ENCODE measurements at regions of chr12 and their contacts with region 1.

Region 1: GRCh38 chr12:56645717-56646446 is at the start of gene ATP5F1B:
- DNase-seq: peak; percentile 98
- H3K4me3 ChIP-seq: peak within 1 kb of the TSS; percentile 76 to 99 (median 89)
- H3K27ac ChIP-seq: peak within 1 kb of the TSS; percentile 92 to 97 (median 94)
- H3K4me1 ChIP-seq: peaks cover 23 to 53% (median 42%) of the 10 kb centered on the region in 6 donors
- H3K27me3 ChIP-seq: no peaks in the 10 kb centered on the region
- CTCF ChIP-seq: peak in 6 of 11 experiments; percentile 11 to 51 (median 26)
- POLR2A ChIP-seq: peak; percentile 58 to 95 (median 86)
- total RNA-seq, gene ATP5F1B: 262 to 375 (median 339) TPM

Region 2: GRCh38 chr12:56593909-56594621 is 51.8 kb before region 1 on chr12:
- intact Hi-C with region 1: no loop called
- DNase-seq: peak; percentile 82
- H3K4me3 ChIP-seq: no peak overlapping the region
- H3K27ac ChIP-seq: peak overlapping the region in 6 of 8 donors; percentile 26 to 62 (median 52)
- H3K4me1 ChIP-seq: peaks cover 0 to 14% (median 9%) of the 10 kb centered on the region in 6 donors
- H3K27me3 ChIP-seq: no peaks in the 10 kb centered on the region
- CTCF ChIP-seq: peak in 10 of 11 experiments; percentile 62 to 87 (median 78)
- POLR2A ChIP-seq: no peak

Region 3: GRCh38 chr12:56684745-56685359 is 39.0 kb after region 1 on chr12:
- intact Hi-C with region 1: loop called (anchors 5 kb)
- DNase-seq: peak; percentile 50
- H3K4me3 ChIP-seq: peak overlapping the region; percentile 7 to 98 (median 81)
- H3K27ac ChIP-seq: peak overlapping the region; percentile 22 to 100 (median 100)
- H3K4me1 ChIP-seq: peaks cover 32 to 88% (median 69%) of the 10 kb centered on the region in 6 donors
- H3K27me3 ChIP-seq: no peaks in the 10 kb centered on the region
- CTCF ChIP-seq: no peak
- POLR2A ChIP-seq: no peak

Measured in spleen (tissue), 13 donors.